AG04450 (cell line): ENCODE measurements at regions of chr3 and their contacts with region 1.

Region 1: DNA sequence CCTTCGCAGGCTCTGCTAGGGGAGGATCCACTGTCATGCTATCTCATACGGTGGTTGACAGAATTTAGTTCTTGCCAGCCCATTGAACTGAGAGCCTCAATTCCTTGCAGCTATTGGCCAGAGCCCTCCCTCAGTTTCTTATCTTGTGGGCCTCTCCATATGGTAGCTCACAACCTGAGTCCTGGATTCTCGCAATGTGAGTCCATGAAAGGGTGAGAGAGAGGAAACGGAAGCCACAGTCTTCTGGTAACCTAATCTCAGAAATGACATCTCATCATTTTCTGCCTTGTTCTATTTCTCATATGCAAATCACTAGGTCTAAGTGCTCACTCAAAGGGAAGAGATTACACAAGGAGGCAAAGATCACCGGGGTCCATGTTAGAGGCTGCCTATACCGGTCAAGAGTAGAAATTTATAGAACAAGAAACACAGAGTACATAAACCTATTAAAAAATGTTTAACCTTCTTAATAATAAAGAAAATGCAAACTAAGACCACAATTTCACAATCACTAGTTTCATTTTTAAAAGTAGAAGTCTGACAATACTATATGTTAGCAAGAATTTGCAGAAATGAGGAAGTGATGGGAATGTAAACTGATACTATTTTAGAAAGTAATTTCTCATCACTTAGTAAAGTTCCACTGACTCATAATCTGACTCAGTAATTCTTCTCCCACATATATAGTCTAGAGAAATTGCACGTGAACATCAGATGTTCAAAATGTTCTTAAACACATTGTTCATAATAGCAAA is 378.4 kb upstream of the AGTR1 start:
- DNase-seq: peak; percentile 44
- H3K4me3 ChIP-seq: no peak overlapping the region
- H3K27ac ChIP-seq: peak overlapping the region; percentile 85
- H3K27me3 ChIP-seq: no peaks in the 10 kb centered on the region
- CTCF ChIP-seq: no peak

Region 2: GRCh38 chr3:148178503-148178902 is 140.8 kb before region 1 on chr3:
- CTCF ChIA-PET with region 1: no interaction called
- POLR2A ChIA-PET with region 1: interaction called, 11 read pairs
- DNase-seq: no peak
- H3K4me3 ChIP-seq: no peak overlapping the region
- H3K27ac ChIP-seq: no peak overlapping the region
- H3K27me3 ChIP-seq: no peaks in the 10 kb centered on the region
- CTCF ChIP-seq: no peak

Region 3: DNA sequence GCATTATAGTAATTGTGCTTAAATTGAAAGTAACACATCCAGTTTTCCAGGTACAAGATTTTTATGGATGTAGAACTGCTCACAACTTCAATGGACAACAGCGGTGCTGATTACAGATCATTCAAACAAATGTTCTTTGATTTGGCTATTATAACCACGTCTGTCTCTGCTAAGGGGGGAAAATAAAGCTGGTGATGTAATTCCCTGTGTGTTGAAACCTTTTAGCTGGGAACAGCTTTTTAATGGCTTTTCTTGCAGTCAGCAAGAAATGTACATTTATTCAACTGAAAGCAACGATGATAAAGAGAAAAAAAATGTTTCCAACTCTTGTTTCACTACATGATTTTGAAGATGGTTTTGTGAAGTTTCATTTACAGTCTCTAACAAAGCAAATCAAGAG is 53.5 kb before region 1 on chr3:
- CTCF ChIA-PET with region 1: no interaction called
- POLR2A ChIA-PET with region 1: no interaction called
- DNase-seq: no peak
- H3K4me3 ChIP-seq: no peak overlapping the region
- H3K27ac ChIP-seq: no peak overlapping the region
- H3K27me3 ChIP-seq: no peaks in the 10 kb centered on the region
- CTCF ChIP-seq: no peak

Region 4: DNA sequence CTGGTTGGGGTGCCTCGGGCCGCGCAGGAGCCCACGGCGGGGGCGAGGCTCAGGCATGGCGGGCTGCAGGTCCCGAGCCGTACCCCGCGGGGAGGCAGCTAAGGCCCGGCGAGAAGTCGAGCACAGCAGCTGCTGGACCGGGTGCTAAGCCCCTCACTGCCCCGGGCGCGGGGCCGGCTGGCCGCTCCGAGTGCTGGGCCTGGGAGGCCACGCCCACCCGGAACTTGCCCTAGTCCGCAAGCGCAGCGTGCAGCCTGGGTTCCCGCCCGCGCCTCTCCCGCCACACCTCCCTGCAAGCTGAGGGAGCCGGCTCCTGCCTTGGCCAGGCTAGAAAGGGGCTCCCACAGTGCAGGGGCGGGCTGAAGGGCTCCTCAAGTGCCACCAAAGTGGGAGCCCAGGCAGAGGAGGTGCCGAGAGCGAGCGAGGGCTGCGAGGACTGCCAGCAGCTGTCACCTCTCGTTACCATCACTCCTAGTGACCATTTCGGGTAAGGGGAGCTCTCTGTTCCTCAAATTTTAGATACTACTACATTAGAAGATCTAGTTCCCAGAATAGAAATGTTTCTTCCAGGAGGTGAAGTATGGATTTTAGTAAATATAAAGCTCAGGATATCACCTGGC is 38.6 kb before region 1 on chr3:
- CTCF ChIA-PET with region 1: no interaction called
- POLR2A ChIA-PET with region 1: no interaction called
- DNase-seq: no peak
- H3K4me3 ChIP-seq: no peak overlapping the region
- H3K27ac ChIP-seq: no peak overlapping the region
- H3K27me3 ChIP-seq: no peaks in the 10 kb centered on the region
- CTCF ChIP-seq: no peak